ENCODE measurements at regions of chr12 and their contacts with region 1.

Region 1: GRCh38 chr12:46268590-46269558 is at the start of gene SLC38A1:
- DNase-seq: peak; percentile 92 to 94
- ATAC-seq: peak; percentile 74
- H3K4me3 ChIP-seq: peak within 1 kb of the TSS; percentile 62 to 78 (median 70)
- H3K27ac ChIP-seq: peak within 1 kb of the TSS; percentile 91 to 98 (median 93)
- H3K4me1 ChIP-seq: peaks cover 7 to 18% of the 10 kb centered on the region in 2 donors
- H3K27me3 ChIP-seq: no peaks in the 10 kb centered on the region
- CTCF ChIP-seq: peak in 1 of 5 experiments; percentile 10
- POLR2A ChIP-seq: peak; percentile 84 to 96
- total RNA-seq, gene SLC38A1: 237 to 472 (median 339) TPM

Region 2: DNA sequence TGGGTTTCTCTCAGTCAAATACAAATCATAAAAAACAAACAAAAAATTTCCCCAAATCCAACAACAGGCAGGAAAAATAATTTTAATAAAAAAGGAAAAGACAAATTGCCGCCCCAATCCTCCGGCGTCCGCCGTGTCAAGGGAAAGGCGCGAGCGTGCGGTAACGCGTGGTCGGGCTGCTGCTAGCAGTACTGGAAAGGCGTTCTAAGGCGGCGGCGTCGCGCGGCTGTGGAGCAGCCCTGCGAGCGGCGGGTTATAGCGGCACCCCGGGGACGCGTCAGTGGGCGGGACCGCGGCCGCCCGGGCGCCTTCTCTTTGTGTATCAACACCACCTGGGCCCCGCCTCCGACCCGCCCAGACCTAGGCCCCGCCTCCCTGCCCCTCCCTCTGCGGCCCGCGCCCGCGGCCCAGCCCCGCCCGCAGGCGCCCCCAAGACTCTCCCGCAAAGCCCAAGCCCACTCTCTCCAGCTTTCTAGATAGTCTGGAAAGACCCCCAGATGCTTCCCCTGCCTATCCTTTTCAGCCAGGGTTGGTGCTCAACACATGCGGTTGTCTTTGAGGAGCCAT is 103.8 kb after region 1 on chr12 and contains the start of gene SLC38A2:
- in situ Hi-C with region 1: no loop called
- intact Hi-C with region 1: loop called (anchors 5 kb)
- DNase-seq: peak; percentile 97 to 98
- ATAC-seq: peak; percentile 69 to 71
- H3K4me3 ChIP-seq: peak within 1 kb of the TSS; percentile 68 to 87 (median 80)
- H3K27ac ChIP-seq: peak within 1 kb of the TSS; percentile 93 to 97 (median 95)
- H3K4me1 ChIP-seq: peaks cover 38 to 46% of the 10 kb centered on the region in 2 donors
- H3K27me3 ChIP-seq: no peaks in the 10 kb centered on the region
- CTCF ChIP-seq: no peak
- POLR2A ChIP-seq: peak; percentile 100
- total RNA-seq, gene SLC38A2: 260 to 853 (median 400) TPM

Region 3: GRCh38 chr12:46556105-46556559 is 287.3 kb after region 1 on chr12:
- in situ Hi-C with region 1: no loop called
- intact Hi-C with region 1: loop called (anchors 5 kb)
- DNase-seq: peak in 1 of 2 donors; percentile 40
- ATAC-seq: peak; percentile 43 to 89
- H3K4me3 ChIP-seq: peak overlapping the region in 1 of 4 donors; percentile 0
- H3K27ac ChIP-seq: peak overlapping the region; percentile 68 to 90 (median 80)
- H3K4me1 ChIP-seq: peaks cover 72 to 82% of the 10 kb centered on the region in 2 donors
- H3K27me3 ChIP-seq: no peaks in the 10 kb centered on the region
- CTCF ChIP-seq: no peak
- POLR2A ChIP-seq: peak in 1 of 2 donors; percentile 34

Region 4: DNA sequence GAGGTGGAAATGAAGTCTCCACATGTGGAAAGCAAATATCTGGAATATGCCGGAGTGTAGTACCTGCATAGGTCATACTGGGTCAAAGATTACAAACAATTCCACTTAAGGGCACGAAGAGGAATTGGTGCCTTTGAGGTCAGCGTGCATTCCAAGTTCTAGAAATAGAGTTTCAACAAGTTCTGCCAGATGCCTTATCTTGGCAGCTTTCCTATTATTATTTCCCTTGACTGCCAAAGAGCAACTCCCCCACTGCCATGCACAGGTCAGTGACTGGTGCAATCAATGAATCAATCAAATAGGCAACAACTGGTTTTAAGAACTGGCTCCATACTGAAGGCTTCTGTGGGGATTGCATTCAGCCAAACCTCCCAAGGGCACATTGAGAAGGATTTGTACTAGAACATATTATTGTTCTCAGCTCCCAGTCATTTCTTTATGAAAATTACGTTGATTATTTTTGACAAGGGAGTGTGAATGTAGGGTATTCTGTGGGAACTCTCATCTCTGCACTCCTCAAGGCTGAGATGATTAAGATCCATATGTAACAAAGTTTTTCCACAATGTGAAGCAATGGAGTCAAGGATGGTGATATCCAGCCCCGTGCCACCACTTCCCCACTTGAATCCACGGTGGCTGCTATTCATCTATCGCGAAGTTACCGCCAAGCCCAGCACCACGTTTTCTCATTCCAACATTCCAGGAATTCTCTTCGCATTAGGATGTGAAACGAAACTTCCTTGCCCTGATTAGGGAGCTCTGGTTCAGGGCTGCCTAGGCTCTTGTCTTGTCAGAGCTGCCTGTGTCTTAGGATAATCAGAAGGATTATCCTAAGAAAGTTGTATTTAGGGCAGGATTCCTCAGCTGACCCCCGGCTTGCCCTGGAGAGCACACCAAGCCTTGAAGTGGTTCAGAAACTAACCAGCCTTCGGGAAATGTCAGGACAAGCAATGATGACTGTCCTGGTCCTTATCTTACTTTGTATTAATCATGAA is 695.4 kb after region 1 on chr12:
- in situ Hi-C with region 1: no loop called
- intact Hi-C with region 1: loop called (anchors 5 kb)
- DNase-seq: no peak
- ATAC-seq: peak; percentile 21 to 33
- H3K4me3 ChIP-seq: peak overlapping the region; percentile 18 to 29 (median 26)
- H3K27ac ChIP-seq: peak overlapping the region; percentile 76 to 86 (median 78)
- H3K4me1 ChIP-seq: peaks cover 37 to 58% of the 10 kb centered on the region in 2 donors
- H3K27me3 ChIP-seq: no peaks in the 10 kb centered on the region
- CTCF ChIP-seq: no peak
- POLR2A ChIP-seq: no peak

Region 5: DNA sequence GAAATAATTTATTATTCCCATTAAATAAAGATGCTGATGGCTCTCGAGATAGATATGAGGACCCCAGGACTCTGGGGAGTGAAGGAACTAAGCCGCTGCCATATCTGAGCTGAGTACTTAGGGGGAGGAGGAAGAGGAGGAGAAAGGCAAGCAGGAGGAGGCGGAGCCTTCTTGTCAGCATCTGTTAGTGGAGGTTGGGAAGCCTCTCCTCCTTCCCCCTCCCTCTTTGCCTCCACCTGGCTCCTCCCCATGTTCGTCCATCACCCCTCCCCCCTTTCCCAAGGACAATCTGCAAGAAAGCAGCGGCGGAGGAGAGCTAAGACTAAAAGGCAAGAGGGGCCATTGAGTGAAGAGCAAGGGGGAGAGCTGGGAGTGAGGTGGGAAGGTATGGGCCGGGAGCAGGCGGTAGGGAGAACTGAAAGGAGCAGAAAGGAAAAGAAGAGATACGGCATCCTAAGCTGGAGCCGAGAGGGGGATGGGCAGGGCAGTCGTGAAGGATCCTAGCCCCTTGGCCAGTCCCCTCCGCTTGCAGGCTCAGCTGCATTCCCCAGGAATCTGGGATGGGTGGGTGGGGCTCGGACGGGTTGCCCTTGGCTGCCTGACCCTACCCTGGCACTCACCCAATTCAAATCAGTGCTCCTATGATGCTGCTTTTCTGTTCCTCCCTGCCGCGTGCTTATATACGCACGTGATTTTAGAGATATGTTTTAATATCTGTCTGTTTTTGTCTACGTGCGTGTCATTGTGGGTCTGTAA is 1850.4 kb after region 1 on chr12 and contains the start of gene PFKM:
- in situ Hi-C with region 1: no loop called
- intact Hi-C with region 1: loop called (anchors 10 kb)
- DNase-seq: peak; percentile 91 to 95
- ATAC-seq: peak; percentile 87 to 90
- H3K4me3 ChIP-seq: peak within 1 kb of the TSS; percentile 71 to 89 (median 86)
- H3K27ac ChIP-seq: peak within 1 kb of the TSS; percentile 84 to 98 (median 93)
- H3K4me1 ChIP-seq: peaks cover 8 to 18% of the 10 kb centered on the region in 2 donors
- H3K27me3 ChIP-seq: no peaks in the 10 kb centered on the region
- CTCF ChIP-seq: no peak
- POLR2A ChIP-seq: peak; percentile 80 to 88
- total RNA-seq, gene PFKM: 341 to 1,022 (median 763) TPM

Measured in gastrocnemius medialis (tissue), 4 donors.